AG04450 (cell line): ENCODE measurements at regions of chr22 and their contacts with region 1.

Region 1: DNA sequence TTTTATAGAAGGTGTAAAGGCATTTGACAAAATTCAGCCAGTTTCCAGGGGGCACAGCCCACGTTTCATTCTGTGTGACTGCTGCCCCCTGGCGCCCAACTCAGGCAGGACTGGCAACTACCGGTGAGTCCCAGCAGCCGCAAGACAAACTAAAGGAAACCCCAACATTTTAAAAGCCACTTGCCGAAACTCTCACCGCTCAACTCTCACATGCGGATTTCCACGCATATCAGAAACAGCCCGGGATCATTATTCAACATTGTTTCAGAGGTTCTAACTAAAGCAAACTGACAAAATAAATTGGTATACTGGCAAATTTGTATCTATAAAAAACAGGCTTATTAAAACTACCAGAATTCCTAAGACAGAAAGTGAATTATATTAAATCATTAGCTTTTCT is 48.2 kb downstream of the MORC2 start:
- DNase-seq: peak; percentile 26
- H3K4me3 ChIP-seq: no peak overlapping the region
- H3K27ac ChIP-seq: no peak overlapping the region
- H3K27me3 ChIP-seq: no peaks in the 10 kb centered on the region
- CTCF ChIP-seq: peak; percentile 94

Region 2: GRCh38 chr22:30634471-30635233 is 285.8 kb before region 1 on chr22:
- CTCF ChIA-PET with region 1: interaction called, 36 read pairs
- POLR2A ChIA-PET with region 1: no interaction called
- DNase-seq: peak; percentile 74
- H3K4me3 ChIP-seq: peak overlapping the region; percentile 39
- H3K27ac ChIP-seq: peak overlapping the region; percentile 79
- H3K27me3 ChIP-seq: no peaks in the 10 kb centered on the region
- CTCF ChIP-seq: peak; percentile 96

Region 3: DNA sequence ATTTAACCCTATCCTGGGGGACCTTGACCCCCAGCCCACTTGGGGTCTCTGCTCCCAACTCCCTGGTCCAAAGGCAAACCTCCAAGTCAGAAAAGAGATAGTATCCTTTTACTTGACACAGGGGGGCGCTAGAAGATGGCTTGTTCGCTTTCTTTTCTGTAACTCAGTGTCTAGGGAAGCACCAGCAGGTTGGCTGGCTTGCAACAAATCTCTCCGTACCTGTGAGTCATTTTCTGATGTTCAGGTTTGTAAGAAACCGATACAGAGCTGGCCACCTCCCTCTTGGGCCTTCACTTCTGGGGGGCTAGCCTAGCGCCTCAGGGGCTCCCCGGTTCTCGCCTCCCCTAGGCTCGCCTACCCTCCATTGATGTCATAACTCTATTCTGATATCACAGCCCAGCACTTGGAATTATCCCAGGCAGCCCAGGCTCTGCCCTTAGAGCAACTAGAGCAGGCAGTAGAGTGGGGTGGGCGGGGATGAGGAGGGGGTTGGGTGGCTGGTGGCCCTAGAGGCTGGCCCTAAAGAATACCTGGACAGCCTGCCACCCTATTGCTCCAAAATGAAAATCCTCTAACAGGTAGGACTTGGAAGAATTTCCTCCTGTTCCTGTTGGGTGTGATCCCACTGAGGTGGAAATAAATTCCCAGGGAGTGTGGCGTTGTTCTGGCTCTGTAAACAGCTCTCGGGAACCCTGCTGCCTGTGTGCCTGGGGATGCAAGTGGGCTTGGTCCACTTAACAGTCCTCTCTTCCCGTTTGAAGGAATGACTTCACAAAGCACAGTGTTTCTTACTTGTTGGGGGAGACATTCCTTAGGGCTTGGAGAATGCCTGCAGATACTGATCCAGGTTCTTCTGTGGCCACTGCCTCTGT is 156.4 kb before region 1 on chr22:
- CTCF ChIA-PET with region 1: interaction called, 271 read pairs
- POLR2A ChIA-PET with region 1: interaction called, 3 read pairs
- DNase-seq: peak; percentile 56
- H3K4me3 ChIP-seq: no peak overlapping the region
- H3K27ac ChIP-seq: no peak overlapping the region
- H3K27me3 ChIP-seq: peaks cover 2% of the 10 kb centered on the region
- CTCF ChIP-seq: peak; percentile 73

Region 4: DNA sequence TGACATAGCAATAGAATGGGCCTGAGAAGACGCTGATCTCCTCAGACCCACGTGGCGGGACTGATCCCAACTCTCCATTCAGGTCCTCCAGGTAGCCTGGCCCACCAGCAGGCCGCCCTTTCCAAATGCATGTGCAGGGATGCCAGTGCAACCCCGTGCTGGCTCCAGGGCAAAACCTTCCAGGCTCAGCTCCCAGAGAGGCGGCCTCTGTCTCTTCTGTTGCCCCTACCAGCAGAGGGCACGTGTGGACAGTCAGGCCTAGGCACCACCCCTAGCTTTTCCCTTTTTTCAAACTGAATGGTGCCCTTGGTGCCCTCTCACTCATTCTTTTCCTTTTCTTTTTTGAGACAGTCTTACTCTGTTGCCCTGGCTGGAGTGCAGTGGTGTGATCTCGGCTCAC is 104.0 kb before region 1 on chr22:
- CTCF ChIA-PET with region 1: interaction called, 13 read pairs
- POLR2A ChIA-PET with region 1: no interaction called
- DNase-seq: no peak
- H3K4me3 ChIP-seq: no peak overlapping the region
- H3K27ac ChIP-seq: no peak overlapping the region
- H3K27me3 ChIP-seq: peaks cover 2% of the 10 kb centered on the region
- CTCF ChIP-seq: no peak

Region 5: DNA sequence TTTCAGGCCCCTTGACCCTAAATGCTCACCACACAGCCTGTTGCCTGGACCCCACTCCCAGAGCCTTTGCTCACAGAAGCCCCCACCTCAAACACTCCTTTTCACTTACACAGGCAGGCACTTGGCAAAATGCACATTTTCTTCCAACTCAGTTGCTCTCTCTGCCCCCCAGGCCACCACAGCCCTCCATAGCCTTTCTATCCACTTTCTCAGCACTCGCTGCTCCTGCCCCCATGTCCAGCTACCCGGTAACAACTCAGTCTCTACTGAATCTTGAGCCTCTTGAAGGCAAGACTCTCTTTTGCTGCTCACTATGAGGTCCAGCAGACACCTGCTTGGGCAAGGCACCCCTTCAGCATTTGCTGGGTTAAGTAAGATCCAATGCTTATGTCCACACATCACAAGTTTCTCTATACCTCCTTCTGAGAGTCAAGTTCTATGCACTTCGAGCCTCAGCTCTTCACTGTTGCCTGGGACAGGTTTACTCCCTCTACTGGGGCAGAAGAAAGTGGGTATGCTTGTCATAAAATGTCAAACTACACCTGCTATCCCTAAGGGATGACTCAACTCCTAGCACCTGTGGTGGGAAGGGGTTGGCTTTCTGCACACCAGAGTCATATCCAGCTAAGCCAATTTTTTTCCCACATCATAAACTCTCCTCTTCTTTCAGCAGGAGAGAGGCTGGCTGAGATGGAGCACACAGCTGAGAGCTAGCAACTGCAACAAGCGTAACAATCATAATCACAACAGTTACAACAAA is 11.3 kb after region 1 on chr22:
- CTCF ChIA-PET with region 1: interaction called, 17 read pairs
- POLR2A ChIA-PET with region 1: no interaction called
- DNase-seq: no peak
- H3K4me3 ChIP-seq: no peak overlapping the region
- H3K27ac ChIP-seq: no peak overlapping the region
- H3K27me3 ChIP-seq: no peaks in the 10 kb centered on the region
- CTCF ChIP-seq: no peak